ENCODE measurements at regions of chr3 and their contacts with region 1.

Region 1: GRCh38 chr3:41199866-41200668 is 762 bp downstream of the CTNNB1 start:
- DNase-seq: peak; percentile 46
- H3K4me3 ChIP-seq: peak overlapping the region; percentile 71
- H3K27ac ChIP-seq: peak overlapping the region; percentile 83
- H3K4me1 ChIP-seq: no peaks in the 10 kb centered on the region
- H3K27me3 ChIP-seq: no peaks in the 10 kb centered on the region
- CTCF ChIP-seq: no peak

Region 2: GRCh38 chr3:40719660-40720287 is 480.3 kb before region 1 on chr3:
- intact Hi-C with region 1: loop called (anchors 10 kb)
- DNase-seq: no peak
- H3K4me3 ChIP-seq: no peak overlapping the region
- H3K27ac ChIP-seq: no peak overlapping the region
- H3K4me1 ChIP-seq: no peaks in the 10 kb centered on the region
- H3K27me3 ChIP-seq: no peaks in the 10 kb centered on the region
- CTCF ChIP-seq: peak; percentile 27

Region 3: DNA sequence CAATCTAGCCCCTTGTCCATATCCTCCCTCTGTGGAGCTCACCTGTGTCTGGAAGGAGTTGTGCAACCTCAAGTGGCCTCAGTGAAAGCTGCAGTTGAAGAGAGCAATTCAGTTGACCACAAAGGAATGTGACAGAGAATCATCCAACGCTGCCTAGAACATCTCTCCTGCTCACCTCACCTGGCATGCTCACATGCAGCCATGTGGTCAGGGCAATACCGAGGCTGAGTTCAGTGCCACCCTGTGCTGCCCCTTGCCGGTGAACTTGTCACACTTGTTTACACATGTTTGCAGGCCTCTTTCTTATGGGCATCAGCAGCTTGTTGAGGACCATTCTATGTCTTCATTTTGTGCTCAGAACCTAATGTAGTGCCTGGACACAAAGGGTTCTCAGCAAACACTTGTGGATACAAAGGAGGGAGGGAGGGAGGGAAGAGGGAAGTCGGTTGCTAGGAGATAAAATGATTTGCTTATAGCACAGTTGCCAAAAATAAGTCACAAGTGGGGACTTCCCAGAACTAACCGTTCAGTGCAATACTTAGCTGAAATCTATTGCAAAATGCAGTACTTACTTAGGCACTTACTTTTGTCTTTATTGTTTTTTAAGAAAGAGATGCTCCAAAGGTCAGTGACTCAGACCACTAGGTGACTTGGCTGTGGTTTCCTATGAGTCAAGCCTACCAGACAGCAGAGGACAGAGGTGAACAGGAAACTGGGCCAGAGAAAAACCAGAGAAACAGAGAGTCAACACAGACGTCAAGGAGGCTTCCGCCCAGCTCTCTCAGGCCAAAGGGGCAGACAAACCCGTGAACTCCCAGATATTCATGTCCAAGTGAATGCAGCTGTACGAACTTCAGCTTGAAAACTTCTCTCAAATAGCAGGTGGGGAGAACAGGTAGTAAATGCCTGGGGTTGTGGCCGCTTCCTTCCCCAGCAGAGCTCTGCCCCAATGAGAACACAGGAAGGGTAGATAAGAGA is 228.6 kb before region 1 on chr3:
- intact Hi-C with region 1: loop called (anchors 10 kb)
- DNase-seq: peak; percentile 76
- H3K4me3 ChIP-seq: no peak overlapping the region
- H3K27ac ChIP-seq: peak overlapping the region; percentile 60
- H3K4me1 ChIP-seq: peaks cover 15% of the 10 kb centered on the region
- H3K27me3 ChIP-seq: no peaks in the 10 kb centered on the region
- CTCF ChIP-seq: no peak

Measured in colonic mucosa (tissue), 4 donors.